ENCODE measurements at regions of chr5 and their contacts with region 1.

Region 1: GRCh38 chr5:81751009-81751835 is at the start of gene SSBP2:
- DNase-seq: peak; percentile 98 to 100 (median 99)
- H3K4me3 ChIP-seq: peak within 1 kb of the TSS; percentile 57 to 97 (median 80)
- H3K27ac ChIP-seq: peak within 1 kb of the TSS; percentile 95 to 100 (median 99)
- H3K27me3 ChIP-seq: no peaks in the 10 kb centered on the region
- CTCF ChIP-seq: peak in 11 of 56 donors; percentile 5 to 38 (median 25)
- total RNA-seq, gene SSBP2: 66.2 to 139 (median 94.4) TPM

Region 2: GRCh38 chr5:81420039-81420667 is 331.1 kb before region 1 on chr5:
- intact Hi-C with region 1: loop called (anchors 5 kb)
- DNase-seq: no peak
- H3K4me3 ChIP-seq: peak overlapping the region in 6 of 59 donors; percentile 1 to 36 (median 17)
- H3K27ac ChIP-seq: peak overlapping the region in 16 of 59 donors; percentile 1 to 51 (median 30)
- H3K27me3 ChIP-seq: no peaks in the 10 kb centered on the region
- CTCF ChIP-seq: no peak

Region 3: DNA sequence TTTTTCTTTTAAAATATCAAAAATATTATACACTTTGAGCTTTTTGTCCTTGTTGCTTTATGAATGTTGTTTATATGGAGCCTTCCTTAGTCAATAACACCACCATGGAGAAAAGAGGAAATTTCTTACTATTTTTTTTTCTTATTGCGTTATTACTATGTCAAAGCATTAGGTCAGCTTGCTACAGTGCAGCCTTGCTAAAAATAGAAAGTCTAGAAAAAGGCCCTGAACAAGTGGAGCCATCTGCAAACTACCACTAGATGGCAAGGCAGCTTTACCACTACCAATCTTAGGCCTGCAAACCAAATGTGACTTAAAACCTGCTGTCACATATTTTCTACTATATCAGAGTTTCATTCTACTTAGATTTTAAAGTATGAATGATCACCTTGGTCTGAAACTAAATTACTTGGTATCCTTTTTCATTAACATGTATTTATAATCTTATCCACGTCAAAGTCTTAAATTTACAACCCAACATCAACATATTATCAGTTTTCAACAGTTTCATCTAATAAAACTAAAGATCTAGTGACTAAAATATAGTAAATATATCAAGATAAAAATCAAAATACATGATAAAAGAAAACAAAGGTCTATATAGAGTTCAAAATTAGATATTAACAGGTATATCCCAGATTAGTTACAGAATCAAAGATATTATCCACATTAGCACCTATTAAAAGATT is 244.2 kb before region 1 on chr5:
- intact Hi-C with region 1: loop called (anchors 2 kb)
- DNase-seq: peak in 7 of 10 donors; percentile 25 to 76 (median 50)
- H3K4me3 ChIP-seq: peak overlapping the region in 8 of 59 donors; percentile 1 to 54 (median 7)
- H3K27ac ChIP-seq: peak overlapping the region in 45 of 59 donors; percentile 0 to 80 (median 41)
- H3K27me3 ChIP-seq: no peaks in the 10 kb centered on the region
- CTCF ChIP-seq: peak; percentile 62 to 98 (median 89)

Region 4: GRCh38 chr5:81631124-81631523 is 120.1 kb before region 1 on chr5:
- intact Hi-C with region 1: no loop called
- DNase-seq: no peak
- H3K4me3 ChIP-seq: no peak overlapping the region
- H3K27ac ChIP-seq: no peak overlapping the region
- H3K27me3 ChIP-seq: no peaks in the 10 kb centered on the region
- CTCF ChIP-seq: no peak

Region 5: GRCh38 chr5:81851481-81852178 is 100.4 kb after region 1 on chr5:
- intact Hi-C with region 1: loop called (anchors 1 kb)
- DNase-seq: peak; percentile 94 to 98 (median 96)
- H3K4me3 ChIP-seq: peak overlapping the region; percentile 44 to 81 (median 61)
- H3K27ac ChIP-seq: peak overlapping the region; percentile 81 to 99 (median 97)
- H3K27me3 ChIP-seq: no peaks in the 10 kb centered on the region
- CTCF ChIP-seq: peak in 27 of 56 donors; percentile 4 to 49 (median 25)

Region 6: GRCh38 chr5:82165740-82166530 is 414.7 kb after region 1 on chr5:
- intact Hi-C with region 1: loop called (anchors 2 to 5 kb)
- DNase-seq: peak in 9 of 10 donors; percentile 49 to 81 (median 69)
- H3K4me3 ChIP-seq: no peak overlapping the region
- H3K27ac ChIP-seq: peak overlapping the region in 51 of 59 donors; percentile 7 to 87 (median 57)
- H3K27me3 ChIP-seq: no peaks in the 10 kb centered on the region
- CTCF ChIP-seq: peak; percentile 58 to 90 (median 79)

Region 7: GRCh38 chr5:82512025-82512424 is 760.8 kb after region 1 on chr5:
- intact Hi-C with region 1: no loop called
- DNase-seq: no peak
- H3K4me3 ChIP-seq: no peak overlapping the region
- H3K27ac ChIP-seq: no peak overlapping the region
- H3K27me3 ChIP-seq: peaks cover 0 to 4% (median 0%) of the 10 kb centered on the region in 45 donors
- CTCF ChIP-seq: no peak

Measured in dorsolateral prefrontal cortex (tissue), 120 donors.